ENCODE measurements at regions of chr15 and their contacts with region 1.

Region 1: GRCh38 chr15:29345549-29346525 is 76.2 kb upstream of the NSMCE3 start:
- DNase-seq: no peak
- ATAC-seq: no peak
- H3K4me3 ChIP-seq: no peak overlapping the region
- H3K4me3 Mint-ChIP-seq: no peak overlapping the region
- H3K27ac ChIP-seq: no peak overlapping the region
- H3K27ac Mint-ChIP-seq: no peak overlapping the region
- H3K4me1 ChIP-seq: no peaks in the 10 kb centered on the region
- H3K4me1 Mint-ChIP-seq: no peaks in the 10 kb centered on the region
- H3K27me3 ChIP-seq: no peaks in the 10 kb centered on the region
- H3K27me3 Mint-ChIP-seq: peaks cover 10% of the 10 kb centered on the region
- CTCF ChIP-seq: no peak

Region 2: GRCh38 chr15:29364429-29365078 is 18.7 kb after region 1 on chr15:
- CTCF ChIA-PET with region 1: no interaction called
- POLR2A ChIA-PET with region 1: no interaction called
- intact Hi-C with region 1: loop called in 1 of 2 experiments (anchors 2 kb)
- DNase-seq: no peak
- ATAC-seq: no peak
- H3K4me3 ChIP-seq: no peak overlapping the region
- H3K4me3 Mint-ChIP-seq: no peak overlapping the region
- H3K27ac ChIP-seq: no peak overlapping the region
- H3K27ac Mint-ChIP-seq: no peak overlapping the region
- H3K4me1 ChIP-seq: no peaks in the 10 kb centered on the region
- H3K4me1 Mint-ChIP-seq: no peaks in the 10 kb centered on the region
- H3K27me3 ChIP-seq: peaks cover 0 to 9% of the 10 kb centered on the region in 2 experiments
- H3K27me3 Mint-ChIP-seq: peaks cover 24% of the 10 kb centered on the region
- CTCF ChIP-seq: no peak

Region 3: GRCh38 chr15:29638781-29639180 is 292.9 kb after region 1 on chr15:
- CTCF ChIA-PET with region 1: no interaction called
- POLR2A ChIA-PET with region 1: no interaction called
- intact Hi-C with region 1: no loop called
- DNase-seq: no peak
- ATAC-seq: no peak
- H3K4me3 ChIP-seq: no peak overlapping the region
- H3K4me3 Mint-ChIP-seq: no peak overlapping the region
- H3K27ac ChIP-seq: no peak overlapping the region
- H3K27ac Mint-ChIP-seq: no peak overlapping the region
- H3K4me1 ChIP-seq: no peaks in the 10 kb centered on the region
- H3K4me1 Mint-ChIP-seq: no peaks in the 10 kb centered on the region
- H3K27me3 ChIP-seq: peaks cover 0 to 8% of the 10 kb centered on the region in 2 experiments
- H3K27me3 Mint-ChIP-seq: peaks cover 19% of the 10 kb centered on the region
- CTCF ChIP-seq: no peak